Sciatic nerve (tissue), 2 donors: ENCODE measurements at regions of chr19 and their contacts with region 1.

Region 1: GRCh38 chr19:12983542-12984142 is 11.6 kb upstream of the NFIX start:
- DNase-seq: peak; percentile 88
- ATAC-seq: peak; percentile 67

Region 2: GRCh38 chr19:12938234-12939025 is 45.2 kb before region 1 on chr19 and contains the start of gene CALR:
- intact Hi-C with region 1: no loop called
- DNase-seq: peak; percentile 100
- ATAC-seq: peak; percentile 96
- total RNA-seq, gene CALR: 454 TPM

Region 3: GRCh38 chr19:13060964-13061927 is 77.6 kb after region 1 on chr19:
- intact Hi-C with region 1: loop called (anchors 10 kb)
- DNase-seq: peak; percentile 94
- ATAC-seq: peak; percentile 87

Region 4: GRCh38 chr19:13093407-13094105 is 109.9 kb after region 1 on chr19:
- intact Hi-C with region 1: loop called (anchors 2 kb)
- DNase-seq: peak; percentile 90
- ATAC-seq: peak; percentile 74